Naive thymus-derived CD4-positive, alpha-beta T cell (primary cell): ENCODE measurements at regions of chr6 and their contacts with region 1.

Region 1: GRCh38 chr6:159042003-159042825 is 2.6 kb downstream of the TAGAP start:
- DNase-seq: peak; percentile 42 to 92 (median 86)
- ATAC-seq: peak; percentile 70
- H3K4me3 ChIP-seq: peak overlapping the region; percentile 88
- H3K4me3 Mint-ChIP-seq: peak overlapping the region; percentile 92 to 100 (median 99)
- H3K27ac ChIP-seq: peak overlapping the region; percentile 92
- H3K27ac Mint-ChIP-seq: peak overlapping the region; percentile 94 to 100 (median 98)
- H3K4me1 ChIP-seq: peaks cover 50 to 58% of the 10 kb centered on the region in 2 donors
- H3K4me1 Mint-ChIP-seq: peaks cover 44 to 68% (median 64%) of the 10 kb centered on the region in 7 donors
- H3K27me3 ChIP-seq: no peaks in the 10 kb centered on the region
- H3K27me3 Mint-ChIP-seq: no peaks in the 10 kb centered on the region

Region 2: DNA sequence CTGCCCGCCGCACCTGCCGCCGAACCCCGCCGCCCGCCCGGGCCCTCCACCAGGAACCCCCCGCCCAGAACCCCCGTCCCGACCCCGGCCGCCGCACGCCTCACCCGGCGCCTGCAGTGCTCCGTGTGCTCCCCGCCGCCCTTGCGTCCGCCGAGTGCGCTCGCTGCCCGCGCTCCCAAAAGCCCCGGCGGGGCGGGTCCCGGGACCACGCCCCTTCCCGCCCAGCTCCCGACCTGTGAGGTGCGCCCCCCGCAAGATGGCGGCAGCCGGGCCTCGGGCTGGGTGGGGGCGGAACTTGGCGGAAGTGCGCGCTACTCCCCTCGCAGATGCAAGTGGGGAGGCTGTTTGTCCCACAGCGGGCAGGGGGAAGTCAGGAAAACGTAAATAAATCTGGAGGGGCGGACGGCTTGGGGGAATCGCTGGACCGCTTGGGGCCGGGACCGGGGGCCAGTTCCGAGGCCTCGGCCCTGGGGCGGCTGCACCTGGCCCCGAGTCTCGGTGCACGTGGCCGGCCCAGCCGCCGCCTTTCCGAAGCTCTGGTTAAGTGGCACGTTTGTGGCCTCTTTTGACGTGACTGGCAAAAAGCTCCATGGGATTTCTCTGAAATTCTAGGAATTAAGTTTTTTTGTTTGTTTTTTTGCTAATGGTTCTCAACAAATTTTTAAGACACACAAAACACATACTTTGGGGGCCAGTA is 222.9 kb before region 1 on chr6 and contains the start of gene EZR:
- CTCF ChIA-PET with region 1: no interaction called
- POLR2A ChIA-PET with region 1: no interaction called
- intact Hi-C with region 1: loop called (anchors 1 kb)
- DNase-seq: peak; percentile 70 to 85 (median 80)
- ATAC-seq: peak; percentile 80
- H3K4me3 ChIP-seq: peak within 1 kb of the TSS; percentile 50
- H3K4me3 Mint-ChIP-seq: peak within 1 kb of the TSS; percentile 81 to 97 (median 90)
- H3K27ac ChIP-seq: peak within 1 kb of the TSS; percentile 99
- H3K27ac Mint-ChIP-seq: peak within 1 kb of the TSS; percentile 89 to 97 (median 91)
- H3K4me1 ChIP-seq: peaks cover 21 to 24% of the 10 kb centered on the region in 2 donors
- H3K4me1 Mint-ChIP-seq: peaks cover 30 to 47% (median 36%) of the 10 kb centered on the region in 7 donors
- H3K27me3 ChIP-seq: no peaks in the 10 kb centered on the region
- H3K27me3 Mint-ChIP-seq: no peaks in the 10 kb centered on the region
- total RNA-seq, gene EZR: 132 to 201 (median 163) TPM

Region 3: GRCh38 chr6:158999666-159000403 is 42.4 kb before region 1 on chr6 and contains the start of gene RSPH3:
- CTCF ChIA-PET with region 1: interaction called, 67 read pairs
- POLR2A ChIA-PET with region 1: interaction called, 5 read pairs
- intact Hi-C with region 1: loop called (anchors 1 to 2 kb)
- DNase-seq: peak; percentile 64 to 93 (median 81)
- ATAC-seq: peak; percentile 93
- H3K4me3 ChIP-seq: peak within 1 kb of the TSS; percentile 97
- H3K4me3 Mint-ChIP-seq: peak within 1 kb of the TSS; percentile 88 to 99 (median 98)
- H3K27ac ChIP-seq: peak within 1 kb of the TSS; percentile 76
- H3K27ac Mint-ChIP-seq: peak within 1 kb of the TSS; percentile 58 to 95 (median 90)
- H3K4me1 ChIP-seq: peaks cover 7 to 16% of the 10 kb centered on the region in 2 donors
- H3K4me1 Mint-ChIP-seq: peaks cover 16 to 35% (median 26%) of the 10 kb centered on the region in 7 donors
- H3K27me3 ChIP-seq: no peaks in the 10 kb centered on the region
- H3K27me3 Mint-ChIP-seq: no peaks in the 10 kb centered on the region
- total RNA-seq, gene RSPH3: 1.3 to 3.6 (median 2.7) TPM

Region 4: DNA sequence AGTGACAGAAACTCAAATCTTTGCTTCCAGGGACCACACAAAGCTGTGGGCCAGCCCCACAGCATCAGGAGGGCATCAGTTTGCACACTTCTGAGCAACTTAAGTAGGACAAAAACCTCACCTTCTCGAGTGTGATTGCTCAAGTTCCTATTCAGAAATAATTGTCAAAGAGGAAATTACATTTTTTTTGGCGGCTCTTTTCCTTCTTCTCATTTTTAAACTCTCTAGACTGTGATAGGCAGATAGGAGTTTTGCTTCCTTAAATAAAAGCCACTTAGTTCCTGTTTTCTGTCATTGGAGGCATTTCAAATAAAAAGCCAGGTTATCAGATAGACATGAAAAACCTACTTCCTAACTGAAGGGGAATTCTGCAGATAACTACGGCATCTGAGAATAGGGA is 13.8 kb after region 1 on chr6:
- CTCF ChIA-PET with region 1: interaction called, 4 read pairs
- POLR2A ChIA-PET with region 1: interaction called, 148 read pairs
- intact Hi-C with region 1: loop called (anchors 1 kb)
- DNase-seq: no peak
- ATAC-seq: peak; percentile 70
- H3K4me3 ChIP-seq: peak overlapping the region; percentile 14
- H3K4me3 Mint-ChIP-seq: peak overlapping the region; percentile 12 to 77 (median 63)
- H3K27ac ChIP-seq: peak overlapping the region; percentile 55
- H3K27ac Mint-ChIP-seq: peak overlapping the region; percentile 6 to 91 (median 82)
- H3K4me1 ChIP-seq: peaks cover 28 to 48% of the 10 kb centered on the region in 2 donors
- H3K4me1 Mint-ChIP-seq: peaks cover 31 to 72% (median 52%) of the 10 kb centered on the region in 7 donors
- H3K27me3 ChIP-seq: no peaks in the 10 kb centered on the region
- H3K27me3 Mint-ChIP-seq: no peaks in the 10 kb centered on the region

Region 5: DNA sequence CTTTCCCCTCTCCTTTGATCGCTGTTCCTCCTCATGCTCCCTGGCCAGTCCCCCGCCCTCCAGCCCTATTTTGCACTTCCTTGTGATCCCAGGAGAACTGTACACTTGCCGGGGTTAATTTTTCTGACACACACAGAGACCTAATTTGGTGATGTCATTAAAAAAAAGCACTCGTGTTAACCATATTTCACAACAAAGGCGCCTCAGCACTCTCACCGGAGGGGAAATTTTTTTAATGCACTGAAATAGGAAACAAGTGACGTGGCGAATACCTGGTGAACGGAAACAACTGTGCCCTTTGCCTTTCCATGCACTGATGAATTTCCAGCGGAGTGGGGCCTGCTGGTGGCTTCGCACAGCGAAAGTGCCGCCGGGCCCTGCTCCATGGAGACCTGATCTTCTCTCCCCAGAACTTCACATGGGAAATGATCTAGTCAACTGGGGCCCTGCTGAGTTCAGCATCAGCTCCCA is 56.5 kb after region 1 on chr6:
- CTCF ChIA-PET with region 1: interaction called, 190 read pairs
- POLR2A ChIA-PET with region 1: interaction called, 267 read pairs
- intact Hi-C with region 1: loop called (anchors 1 kb)
- DNase-seq: peak; percentile 20 to 91 (median 84)
- ATAC-seq: peak; percentile 80
- H3K4me3 ChIP-seq: peak overlapping the region; percentile 32
- H3K4me3 Mint-ChIP-seq: peak overlapping the region; percentile 70 to 88 (median 83)
- H3K27ac ChIP-seq: peak overlapping the region; percentile 80
- H3K27ac Mint-ChIP-seq: peak overlapping the region; percentile 92 to 98 (median 96)
- H3K4me1 ChIP-seq: peaks cover 30 to 57% of the 10 kb centered on the region in 2 donors
- H3K4me1 Mint-ChIP-seq: peaks cover 47 to 86% (median 75%) of the 10 kb centered on the region in 7 donors
- H3K27me3 ChIP-seq: no peaks in the 10 kb centered on the region
- H3K27me3 Mint-ChIP-seq: no peaks in the 10 kb centered on the region

Region 6: DNA sequence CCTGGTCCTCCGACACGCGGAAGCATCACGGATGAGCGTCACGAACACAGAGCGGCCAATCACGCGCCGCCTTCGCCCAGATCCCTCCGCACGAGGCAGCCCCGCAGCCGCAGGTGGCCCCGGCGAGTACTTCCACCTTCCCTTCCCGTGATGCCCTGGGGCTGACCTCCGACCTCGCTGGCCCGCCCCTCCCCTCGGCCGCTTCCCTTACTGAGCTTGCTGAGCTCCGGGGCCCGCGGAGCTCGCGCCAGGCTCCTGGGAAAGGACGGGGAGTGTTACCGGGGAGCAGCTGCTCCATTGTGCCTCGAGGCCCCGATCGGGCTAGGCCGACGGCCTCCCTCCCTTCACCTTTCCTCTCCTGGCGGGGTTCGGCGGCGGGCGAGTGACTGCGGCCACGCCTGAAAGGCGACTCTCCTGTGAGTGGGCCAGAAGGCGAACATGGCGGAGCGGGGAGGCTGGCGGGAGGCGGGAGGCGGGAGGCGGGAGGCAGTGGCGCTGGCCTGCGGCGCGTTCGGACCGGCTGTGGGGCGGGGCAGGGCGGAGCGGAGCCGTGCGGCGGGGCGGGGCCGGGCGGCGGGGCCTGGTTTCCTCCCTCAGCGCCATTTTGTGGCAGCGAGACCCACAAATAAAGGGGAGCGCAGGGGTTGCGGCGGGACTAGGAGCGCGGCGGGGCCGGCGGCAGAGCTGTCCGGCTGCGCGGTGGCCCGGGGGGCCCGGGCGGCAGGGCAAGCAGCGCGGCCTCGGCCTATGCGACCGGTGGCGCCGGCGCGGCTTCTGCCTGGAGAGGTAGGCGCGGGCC is 684.9 kb after region 1 on chr6 and contains the start of gene WTAP:
- CTCF ChIA-PET with region 1: no interaction called
- POLR2A ChIA-PET with region 1: no interaction called
- intact Hi-C with region 1: loop called in 1 of 2 experiments (anchors 10 kb)
- DNase-seq: peak; percentile 83 to 97 (median 97)
- ATAC-seq: peak; percentile 93
- H3K4me3 ChIP-seq: peak within 1 kb of the TSS; percentile 89
- H3K4me3 Mint-ChIP-seq: peak within 1 kb of the TSS; percentile 87 to 97 (median 95)
- H3K27ac ChIP-seq: peak within 1 kb of the TSS; percentile 91
- H3K27ac Mint-ChIP-seq: peak within 1 kb of the TSS; percentile 95 to 100 (median 99)
- H3K4me1 ChIP-seq: peaks cover 33 to 34% of the 10 kb centered on the region in 2 donors
- H3K4me1 Mint-ChIP-seq: peaks cover 34 to 79% (median 67%) of the 10 kb centered on the region in 7 donors
- H3K27me3 ChIP-seq: no peaks in the 10 kb centered on the region
- H3K27me3 Mint-ChIP-seq: peaks cover 0 to 6% (median 0%) of the 10 kb centered on the region in 5 donors
- total RNA-seq, gene WTAP: 117 to 152 (median 141) TPM